B cell (primary cell): ENCODE measurements at regions of chr7 and their contacts with region 1.

Region 1: GRCh38 chr7:149005241-149006050 is 22.9 kb downstream of the PDIA4 start:
- DNase-seq: peak; percentile 86
- ATAC-seq: peak; percentile 93
- H3K4me3 ChIP-seq: no peak overlapping the region
- H3K4me3 Mint-ChIP-seq: no peak overlapping the region
- H3K27ac ChIP-seq: no peak overlapping the region
- H3K27ac Mint-ChIP-seq: no peak overlapping the region
- H3K4me1 ChIP-seq: peaks cover 0 to 7% of the 10 kb centered on the region in 2 donors
- H3K4me1 Mint-ChIP-seq: peaks cover 4% of the 10 kb centered on the region
- H3K27me3 ChIP-seq: no peaks in the 10 kb centered on the region
- H3K27me3 Mint-ChIP-seq: no peaks in the 10 kb centered on the region
- CTCF ChIP-seq: peak; percentile 90

Region 2: DNA sequence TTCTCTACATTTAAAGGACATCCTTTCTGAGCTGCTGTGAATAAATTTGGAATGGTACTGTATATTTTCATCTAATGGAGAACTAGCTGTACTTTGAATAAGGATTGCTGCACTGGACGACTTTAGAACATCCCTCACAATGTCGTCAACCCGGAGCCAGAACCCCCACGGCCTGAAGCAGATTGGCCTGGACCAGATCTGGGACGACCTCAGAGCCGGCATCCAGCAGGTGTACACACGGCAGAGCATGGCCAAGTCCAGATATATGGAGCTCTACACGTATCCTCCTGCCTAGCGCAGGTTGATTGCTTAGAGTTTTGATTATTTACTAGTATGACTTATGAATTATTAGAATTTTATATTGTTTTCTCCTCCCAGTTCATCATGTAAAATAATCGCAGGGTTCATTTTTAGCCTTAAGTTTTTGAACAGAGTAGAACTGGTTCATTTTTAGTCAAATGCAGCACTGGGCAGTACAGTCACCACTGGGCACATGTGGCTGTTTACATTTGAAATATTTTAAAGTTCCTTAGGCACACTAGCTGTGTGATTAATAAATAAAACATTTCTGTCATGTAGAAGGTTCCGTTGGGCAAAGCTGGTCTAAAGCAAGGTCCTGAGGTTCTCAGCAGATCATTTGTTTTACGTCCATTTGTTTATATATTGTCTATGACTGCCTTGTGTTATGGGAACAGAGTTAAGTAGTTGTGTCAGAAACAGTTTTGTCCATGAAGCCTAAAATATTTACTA is 275.3 kb before region 1 on chr7:
- CTCF ChIA-PET with region 1: no interaction called
- POLR2A ChIA-PET with region 1: no interaction called
- intact Hi-C with region 1: no loop called
- DNase-seq: no peak
- ATAC-seq: no peak
- H3K4me3 ChIP-seq: no peak overlapping the region
- H3K4me3 Mint-ChIP-seq: no peak overlapping the region
- H3K27ac ChIP-seq: no peak overlapping the region
- H3K27ac Mint-ChIP-seq: no peak overlapping the region
- H3K4me1 ChIP-seq: peaks cover 15 to 21% of the 10 kb centered on the region in 2 donors
- H3K4me1 Mint-ChIP-seq: peaks cover 32% of the 10 kb centered on the region
- H3K27me3 ChIP-seq: no peaks in the 10 kb centered on the region
- H3K27me3 Mint-ChIP-seq: no peaks in the 10 kb centered on the region
- CTCF ChIP-seq: no peak

Region 3: GRCh38 chr7:148994601-148995000 is 10.8 kb before region 1 on chr7:
- CTCF ChIA-PET with region 1: interaction called, 64 read pairs
- POLR2A ChIA-PET with region 1: no interaction called
- intact Hi-C with region 1: no loop called
- DNase-seq: no peak
- ATAC-seq: no peak
- H3K4me3 ChIP-seq: no peak overlapping the region
- H3K4me3 Mint-ChIP-seq: no peak overlapping the region
- H3K27ac ChIP-seq: no peak overlapping the region
- H3K27ac Mint-ChIP-seq: no peak overlapping the region
- H3K4me1 ChIP-seq: no peaks in the 10 kb centered on the region
- H3K4me1 Mint-ChIP-seq: no peaks in the 10 kb centered on the region
- H3K27me3 ChIP-seq: no peaks in the 10 kb centered on the region
- H3K27me3 Mint-ChIP-seq: no peaks in the 10 kb centered on the region
- CTCF ChIP-seq: no peak

Region 4: GRCh38 chr7:149060156-149060555 is 54.7 kb after region 1 on chr7:
- CTCF ChIA-PET with region 1: interaction called, 58 read pairs
- POLR2A ChIA-PET with region 1: interaction called, 11 read pairs
- intact Hi-C with region 1: loop called (anchors 1 kb)
- DNase-seq: no peak
- ATAC-seq: no peak
- H3K4me3 ChIP-seq: no peak overlapping the region
- H3K4me3 Mint-ChIP-seq: no peak overlapping the region
- H3K27ac ChIP-seq: no peak overlapping the region
- H3K27ac Mint-ChIP-seq: no peak overlapping the region
- H3K4me1 ChIP-seq: peaks cover 0 to 8% of the 10 kb centered on the region in 2 donors
- H3K4me1 Mint-ChIP-seq: peaks cover 5% of the 10 kb centered on the region
- H3K27me3 ChIP-seq: no peaks in the 10 kb centered on the region
- H3K27me3 Mint-ChIP-seq: no peaks in the 10 kb centered on the region
- CTCF ChIP-seq: no peak

Region 5: DNA sequence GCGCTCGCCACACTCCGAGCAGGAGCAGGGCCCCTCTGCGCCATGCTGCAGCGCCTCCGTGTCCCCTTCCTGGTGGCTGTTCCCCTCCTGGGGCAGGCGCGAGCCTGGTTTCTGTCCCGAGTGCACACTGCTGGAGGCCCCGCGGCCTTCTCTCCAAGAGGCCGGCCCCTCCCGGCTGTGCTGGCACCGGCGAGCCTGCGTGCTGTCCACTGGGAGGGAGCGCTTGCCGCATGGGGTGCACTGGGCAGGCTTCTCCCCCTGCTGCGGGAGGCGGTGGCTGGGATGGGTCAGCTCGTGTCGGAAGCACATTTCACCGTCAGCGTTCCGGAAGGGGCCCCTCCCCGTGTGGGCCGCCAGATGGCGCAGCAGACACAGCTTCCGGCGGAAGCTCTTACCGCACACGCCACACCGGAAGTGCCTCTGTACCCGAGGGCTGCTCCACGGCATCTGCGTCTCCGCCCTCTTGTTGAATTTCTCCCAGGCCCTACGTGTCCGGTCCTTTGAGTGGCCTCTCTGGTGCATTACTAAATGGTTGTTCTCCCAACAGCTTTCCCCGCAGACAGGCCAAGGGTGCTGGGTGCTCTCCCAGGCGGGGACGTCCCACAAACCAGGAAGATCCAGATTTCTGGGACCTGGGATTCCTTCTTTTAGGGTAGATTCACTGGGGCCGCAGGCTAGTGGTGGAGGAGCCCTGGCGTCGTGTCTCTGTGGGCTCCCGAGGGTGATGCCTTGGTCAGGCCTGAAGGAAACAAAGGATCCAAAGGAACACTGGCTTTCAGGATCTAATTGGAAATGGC is 66.4 kb after region 1 on chr7:
- CTCF ChIA-PET with region 1: interaction called, 58 read pairs
- POLR2A ChIA-PET with region 1: no interaction called
- intact Hi-C with region 1: no loop called
- DNase-seq: peak; percentile 26
- ATAC-seq: peak; percentile 28
- H3K4me3 ChIP-seq: peak overlapping the region in 1 of 5 experiments; percentile 5
- H3K4me3 Mint-ChIP-seq: no peak overlapping the region
- H3K27ac ChIP-seq: no peak overlapping the region
- H3K27ac Mint-ChIP-seq: no peak overlapping the region
- H3K4me1 ChIP-seq: no peaks in the 10 kb centered on the region
- H3K4me1 Mint-ChIP-seq: peaks cover 3% of the 10 kb centered on the region
- H3K27me3 ChIP-seq: no peaks in the 10 kb centered on the region
- H3K27me3 Mint-ChIP-seq: no peaks in the 10 kb centered on the region
- CTCF ChIP-seq: peak; percentile 25